Calu3 (cell line): ENCODE measurements at regions of chr12 and their contacts with region 1.

Region 1: DNA sequence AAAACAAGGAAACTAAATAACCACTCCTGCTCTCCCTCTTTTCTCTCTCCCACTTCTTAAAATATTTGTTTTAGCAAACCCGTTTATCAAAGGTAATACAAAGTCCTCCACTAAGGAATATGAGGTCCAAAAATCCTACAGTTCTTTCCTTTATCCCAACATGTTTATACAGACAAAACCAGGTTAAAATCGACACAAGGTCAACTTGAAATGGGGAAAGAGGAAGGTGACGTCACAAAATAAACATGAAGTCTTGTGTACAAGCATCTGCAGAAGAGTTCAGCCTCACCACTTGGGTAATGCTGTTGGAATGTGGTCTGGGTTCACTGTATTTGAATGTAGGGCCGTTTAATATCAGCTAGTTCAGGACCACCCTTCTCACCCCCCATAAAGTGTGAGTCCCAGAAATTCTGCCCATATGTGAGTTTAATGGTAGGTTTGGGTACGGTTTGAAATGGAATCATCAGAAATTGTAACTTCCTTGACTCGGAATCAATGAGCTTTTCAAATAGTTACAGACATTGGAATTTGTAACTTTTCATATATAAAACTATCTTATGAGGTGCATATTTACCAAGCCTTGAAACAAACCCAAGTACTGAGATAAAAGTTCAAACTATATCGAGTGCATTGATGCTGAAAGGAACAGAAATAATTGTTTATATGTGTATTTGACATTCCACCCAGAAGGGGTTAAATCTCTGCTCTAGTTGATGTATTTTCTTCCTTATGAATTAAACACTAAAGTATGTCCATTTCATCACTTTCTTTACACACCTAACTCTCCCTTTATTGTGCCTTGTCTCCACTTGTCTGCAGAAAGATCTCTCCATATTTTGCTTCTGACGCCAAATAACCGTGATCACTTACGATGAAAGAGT is 120.1 kb upstream of the SLC38A2 start:
- DNase-seq: peak; percentile 45
- H3K4me3 Mint-ChIP-seq: peak overlapping the region; percentile 15
- H3K27ac Mint-ChIP-seq: peak overlapping the region; percentile 89
- H3K4me1 Mint-ChIP-seq: peaks cover 30% of the 10 kb centered on the region
- H3K27me3 Mint-ChIP-seq: no peaks in the 10 kb centered on the region
- CTCF ChIP-seq: no peak

Region 2: GRCh38 chr12:46372544-46373110 is 120.1 kb before region 1 on chr12 and contains the start of gene SLC38A2:
- CTCF ChIA-PET with region 1: interaction called, 3 read pairs
- intact Hi-C with region 1: loop called (anchors 5 kb)
- DNase-seq: peak; percentile 95
- H3K4me3 Mint-ChIP-seq: peak within 1 kb of the TSS; percentile 88
- H3K27ac Mint-ChIP-seq: peak within 1 kb of the TSS; percentile 87
- H3K4me1 Mint-ChIP-seq: peaks cover 12% of the 10 kb centered on the region
- H3K27me3 Mint-ChIP-seq: no peaks in the 10 kb centered on the region
- CTCF ChIP-seq: no peak
- total RNA-seq, gene SLC38A2: 142 and 170 TPM in 2 replicates